ENCODE measurements at regions of chr10 and their contacts with region 1.

Region 1: GRCh38 chr10:62244780-62245467 is 23.7 kb downstream of the RTKN2 start:
- DNase-seq: peak; percentile 70
- H3K4me3 ChIP-seq: no peak overlapping the region
- H3K27ac ChIP-seq: no peak overlapping the region
- H3K4me1 ChIP-seq: no peaks in the 10 kb centered on the region
- H3K27me3 ChIP-seq: no peaks in the 10 kb centered on the region
- CTCF ChIP-seq: peak; percentile 85

Region 2: GRCh38 chr10:61903221-61903927 is 341.6 kb before region 1 on chr10:
- intact Hi-C with region 1: loop called (anchors 5 kb)
- DNase-seq: peak; percentile 74
- H3K4me3 ChIP-seq: peak overlapping the region; percentile 51
- H3K27ac ChIP-seq: peak overlapping the region; percentile 93
- H3K4me1 ChIP-seq: peaks cover 8% of the 10 kb centered on the region
- H3K27me3 ChIP-seq: no peaks in the 10 kb centered on the region
- CTCF ChIP-seq: peak; percentile 17

Region 3: GRCh38 chr10:62038609-62039190 is 206.2 kb before region 1 on chr10:
- intact Hi-C with region 1: loop called (anchors 5 kb)
- DNase-seq: peak; percentile 85
- H3K4me3 ChIP-seq: no peak overlapping the region
- H3K27ac ChIP-seq: peak overlapping the region; percentile 50
- H3K4me1 ChIP-seq: peaks cover 3% of the 10 kb centered on the region
- H3K27me3 ChIP-seq: no peaks in the 10 kb centered on the region
- CTCF ChIP-seq: peak; percentile 77

Measured in colonic mucosa (tissue), 4 donors.